ENCODE measurements at regions of chr4 and their contacts with region 1.

Region 1: GRCh38 chr4:1899149-1900086 is 28.2 kb downstream of the NSD2 start:
- DNase-seq: peak; percentile 53 to 82
- H3K4me3 ChIP-seq: no peak overlapping the region
- H3K27ac ChIP-seq: no peak overlapping the region
- H3K4me1 ChIP-seq: no peaks in the 10 kb centered on the region
- H3K27me3 ChIP-seq: no peaks in the 10 kb centered on the region
- CTCF ChIP-seq: peak; percentile 73 to 87 (median 83)
- EP300 ChIP-seq: no peak
- POLR2A ChIP-seq: no peak
- RAD21 ChIP-seq: peak; percentile 88 to 92

Region 2: DNA sequence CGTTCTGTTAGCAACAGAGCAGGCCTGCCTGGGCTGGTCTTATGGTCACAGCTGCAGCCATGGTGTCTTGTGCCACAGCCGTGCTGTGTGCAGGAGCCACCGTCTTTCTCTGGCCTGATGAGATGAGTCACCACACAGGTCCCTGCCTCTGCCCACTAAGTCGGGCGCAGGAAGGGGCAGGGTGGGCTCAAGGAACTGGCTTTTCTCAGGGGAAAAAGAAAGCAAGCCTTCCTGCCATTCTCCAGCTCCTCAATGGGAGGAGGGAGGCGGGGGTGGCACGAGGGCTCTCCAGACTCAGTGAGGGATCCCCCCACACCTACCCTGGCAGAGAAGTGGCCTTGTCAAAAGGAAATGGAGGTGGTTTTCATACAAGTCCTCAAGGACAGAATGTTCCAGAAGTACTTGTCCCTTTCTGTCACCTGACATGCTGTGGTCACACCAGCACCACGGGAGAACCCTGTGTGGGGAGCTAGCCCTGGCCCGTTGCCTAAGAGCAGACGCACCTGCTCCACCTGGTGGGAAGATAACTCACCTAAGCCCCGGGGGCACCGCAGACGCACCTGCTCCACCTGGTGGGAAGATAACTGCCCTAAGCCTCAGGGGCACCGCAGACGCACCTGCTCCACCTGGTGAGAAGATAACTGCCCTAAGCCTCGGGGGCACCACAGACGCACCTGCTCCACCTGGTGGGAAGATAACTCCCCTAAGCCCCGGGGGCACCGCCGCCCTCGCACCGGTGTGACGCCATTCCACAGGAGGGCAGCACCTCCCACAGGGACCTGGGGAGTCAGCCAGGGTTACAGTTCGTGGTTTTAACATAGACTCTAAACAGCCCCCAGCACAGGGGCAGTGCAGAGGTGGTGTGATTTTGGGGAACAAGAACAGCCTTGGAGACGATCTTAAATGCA is 533.9 kb before region 1 on chr4:
- CTCF ChIA-PET with region 1: no interaction called
- POLR2A ChIA-PET with region 1: no interaction called
- DNase-seq: no peak
- H3K4me3 ChIP-seq: no peak overlapping the region
- H3K27ac ChIP-seq: no peak overlapping the region
- H3K4me1 ChIP-seq: peaks cover 0 to 2% (median 0%) of the 10 kb centered on the region in 4 experiments; a peak in 1 of 7 replicates
- H3K27me3 ChIP-seq: no peaks in the 10 kb centered on the region
- CTCF ChIP-seq: peak in 2 of 3 experiments; percentile 46 to 59; a peak in 3 of 4 replicates
- EP300 ChIP-seq: no peak
- POLR2A ChIP-seq: no peak
- RAD21 ChIP-seq: peak; percentile 12 to 32; a peak in 3 of 4 replicates

Region 3: DNA sequence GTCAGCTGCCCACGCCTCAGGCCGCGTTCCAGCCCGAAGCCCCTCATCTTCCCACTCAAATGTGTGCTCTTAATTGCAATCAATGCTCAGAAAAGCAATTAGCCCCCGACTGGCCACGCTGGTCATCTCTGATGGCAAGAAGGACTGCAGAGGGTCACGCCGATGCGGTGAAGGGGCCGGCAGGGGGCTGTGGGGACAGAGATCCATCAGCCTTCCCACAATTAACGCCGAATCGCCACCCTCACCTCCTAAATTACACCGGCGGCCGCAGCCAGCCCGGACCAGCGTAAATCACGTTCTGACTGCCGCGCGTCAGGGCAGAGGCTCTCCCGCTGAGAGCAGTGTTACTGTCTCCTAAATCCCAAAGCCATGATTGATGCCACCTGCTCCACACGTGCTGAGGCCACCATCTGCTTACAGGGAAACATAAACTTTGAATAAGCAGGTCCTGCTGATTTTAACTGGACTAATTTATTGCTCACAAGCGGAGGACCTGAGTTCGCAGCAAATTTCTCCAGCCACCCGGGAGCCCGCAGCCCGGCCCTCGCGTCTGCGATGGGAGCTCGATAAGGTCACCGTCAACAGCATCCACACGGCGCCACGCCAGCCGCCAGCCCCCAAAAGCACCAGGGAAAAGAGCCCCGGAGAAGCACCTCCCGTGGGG is 365.9 kb before region 1 on chr4:
- CTCF ChIA-PET with region 1: no interaction called
- POLR2A ChIA-PET with region 1: no interaction called
- DNase-seq: no peak
- H3K4me3 ChIP-seq: no peak overlapping the region
- H3K27ac ChIP-seq: no peak overlapping the region
- H3K4me1 ChIP-seq: no peaks in the 10 kb centered on the region; a peak in 1 of 7 replicates
- H3K27me3 ChIP-seq: no peaks in the 10 kb centered on the region
- CTCF ChIP-seq: no peak
- EP300 ChIP-seq: no peak
- POLR2A ChIP-seq: no peak
- RAD21 ChIP-seq: no peak

Region 4: DNA sequence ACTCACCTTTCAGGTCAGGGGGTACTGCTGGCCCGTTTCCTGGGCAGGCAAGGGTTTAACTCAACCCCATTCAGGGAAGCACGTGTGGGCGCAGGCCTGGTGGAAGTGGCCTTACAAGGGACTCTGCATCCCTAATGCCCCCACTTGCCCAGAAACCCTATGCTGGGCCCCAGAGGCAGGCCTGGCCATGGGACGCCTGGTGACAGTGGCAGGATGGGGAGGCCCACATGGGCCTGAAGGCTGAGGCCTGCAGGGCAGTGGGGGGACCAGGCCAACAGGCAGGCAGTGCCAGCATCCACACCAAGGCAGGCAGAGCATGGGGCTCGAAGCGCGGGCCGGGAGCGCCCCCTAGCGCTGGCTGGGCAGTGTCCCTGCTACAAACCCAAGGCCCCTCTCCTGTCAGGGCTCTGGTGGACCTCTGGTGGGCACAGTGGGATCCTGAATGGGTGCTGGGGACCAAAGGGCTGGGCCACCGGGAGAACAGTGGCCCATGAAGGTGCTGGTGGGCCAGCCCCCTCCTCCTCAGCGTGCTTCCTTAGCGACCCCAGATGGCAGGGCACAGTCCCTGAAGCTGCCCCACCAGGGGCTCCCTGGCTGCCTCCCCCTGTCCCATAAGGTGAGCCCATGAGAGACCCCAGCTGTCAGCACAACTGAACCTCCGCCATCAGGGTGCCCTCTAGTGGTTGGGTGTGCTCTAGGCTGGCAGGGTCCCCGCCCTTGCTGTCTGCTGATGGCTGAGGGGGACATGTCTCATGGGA is 89.5 kb before region 1 on chr4:
- CTCF ChIA-PET with region 1: interaction called, 22 read pairs
- POLR2A ChIA-PET with region 1: no interaction called
- DNase-seq: peak; percentile 76 to 98
- H3K4me3 ChIP-seq: no peak overlapping the region
- H3K27ac ChIP-seq: no peak overlapping the region
- H3K4me1 ChIP-seq: no peaks in the 10 kb centered on the region; a peak in 1 of 7 replicates
- H3K27me3 ChIP-seq: no peaks in the 10 kb centered on the region
- CTCF ChIP-seq: peak in 2 of 3 experiments; percentile 95 to 98; a peak in 3 of 4 replicates
- EP300 ChIP-seq: no peak
- POLR2A ChIP-seq: peak in 1 of 2 experiments; percentile 36; a peak in 1 of 3 replicates
- RAD21 ChIP-seq: peak; percentile 95 to 98

Region 5: DNA sequence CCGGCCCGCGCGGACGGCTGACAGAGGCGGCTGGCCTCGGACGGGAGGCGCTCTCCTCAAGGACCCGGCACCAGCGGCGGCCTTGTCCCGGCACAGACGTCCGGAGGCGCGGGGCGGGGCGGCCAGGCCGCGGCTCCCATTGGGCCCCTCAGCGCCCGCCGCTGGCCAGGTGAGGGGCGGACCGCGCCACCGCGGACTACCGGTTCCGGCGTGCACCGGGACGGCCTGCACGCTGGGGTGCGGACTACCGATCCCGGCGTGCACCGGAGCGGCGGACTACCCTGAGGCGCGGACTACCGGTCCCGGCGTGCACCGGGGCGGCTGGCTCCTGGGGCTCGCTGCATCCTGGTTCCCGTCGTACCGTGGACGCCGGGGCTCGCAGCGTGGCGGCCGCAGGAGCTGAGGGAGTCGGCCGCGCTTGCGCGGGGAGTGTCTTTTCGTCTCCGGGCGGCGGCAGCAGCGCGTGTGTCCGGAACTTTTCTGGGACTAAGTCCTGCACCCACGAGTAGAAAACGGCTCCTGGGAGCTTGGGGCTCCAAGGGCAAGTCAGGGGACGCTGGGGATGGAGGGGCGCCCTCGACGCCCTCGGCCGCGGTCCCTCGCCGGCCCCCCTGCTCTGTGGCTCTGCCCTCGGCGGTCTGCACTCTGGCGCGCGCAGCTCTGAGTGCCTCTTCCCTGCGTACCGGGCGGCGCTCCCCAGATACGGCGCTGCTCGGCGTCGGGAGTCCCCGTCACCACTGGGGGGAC is 43.2 kb before region 1 on chr4 and contains the start of gene LETM1:
- CTCF ChIA-PET with region 1: interaction called, 35 read pairs
- POLR2A ChIA-PET with region 1: interaction called, 3 read pairs
- DNase-seq: peak; percentile 72 to 92
- H3K4me3 ChIP-seq: peak within 1 kb of the TSS; percentile 62 to 79 (median 72)
- H3K27ac ChIP-seq: no peak within 1 kb of the TSS; the same call in 1 of the 2 replicates
- H3K4me1 ChIP-seq: peaks cover 0 to 14% (median 7%) of the 10 kb centered on the region in 4 experiments; a peak in 5 of 7 replicates
- H3K27me3 ChIP-seq: peaks cover 32 to 51% (median 47%) of the 10 kb centered on the region in 4 experiments
- CTCF ChIP-seq: peak in 1 of 3 experiments; percentile 5; a peak in 1 of 4 replicates
- EP300 ChIP-seq: no peak
- POLR2A ChIP-seq: peak in 1 of 2 experiments; percentile 59; a peak in 1 of 3 replicates
- RAD21 ChIP-seq: no peak
- total RNA-seq, gene LETM1: 50.1 and 53.1 TPM in 2 replicates

Region 6: GRCh38 chr4:1883583-1883982 is 15.8 kb before region 1 on chr4:
- CTCF ChIA-PET with region 1: interaction called, 65 read pairs
- POLR2A ChIA-PET with region 1: interaction called, 3 read pairs
- DNase-seq: no peak
- H3K4me3 ChIP-seq: no peak overlapping the region
- H3K27ac ChIP-seq: no peak overlapping the region
- H3K4me1 ChIP-seq: no peaks in the 10 kb centered on the region; a peak in 2 of 7 replicates
- H3K27me3 ChIP-seq: no peaks in the 10 kb centered on the region
- CTCF ChIP-seq: no peak
- EP300 ChIP-seq: no peak
- POLR2A ChIP-seq: no peak
- RAD21 ChIP-seq: no peak

Region 7: GRCh38 chr4:1922821-1923220 is 23.4 kb after region 1 on chr4:
- CTCF ChIA-PET with region 1: interaction called, 18 read pairs
- POLR2A ChIA-PET with region 1: interaction called, 3 read pairs
- DNase-seq: no peak
- H3K4me3 ChIP-seq: no peak overlapping the region
- H3K27ac ChIP-seq: no peak overlapping the region
- H3K4me1 ChIP-seq: no peaks in the 10 kb centered on the region
- H3K27me3 ChIP-seq: no peaks in the 10 kb centered on the region
- CTCF ChIP-seq: no peak
- EP300 ChIP-seq: no peak
- POLR2A ChIP-seq: no peak
- RAD21 ChIP-seq: no peak